AG04449 (cell line): ENCODE measurements at regions of chr9 and their contacts with region 1.

Region 1: GRCh38 chr9:18473652-18474279 is at the start of gene ADAMTSL1:
- DNase-seq: no peak
- H3K4me3 ChIP-seq: peak within 1 kb of the TSS; percentile 84
- CTCF ChIP-seq: no peak

Region 2: DNA sequence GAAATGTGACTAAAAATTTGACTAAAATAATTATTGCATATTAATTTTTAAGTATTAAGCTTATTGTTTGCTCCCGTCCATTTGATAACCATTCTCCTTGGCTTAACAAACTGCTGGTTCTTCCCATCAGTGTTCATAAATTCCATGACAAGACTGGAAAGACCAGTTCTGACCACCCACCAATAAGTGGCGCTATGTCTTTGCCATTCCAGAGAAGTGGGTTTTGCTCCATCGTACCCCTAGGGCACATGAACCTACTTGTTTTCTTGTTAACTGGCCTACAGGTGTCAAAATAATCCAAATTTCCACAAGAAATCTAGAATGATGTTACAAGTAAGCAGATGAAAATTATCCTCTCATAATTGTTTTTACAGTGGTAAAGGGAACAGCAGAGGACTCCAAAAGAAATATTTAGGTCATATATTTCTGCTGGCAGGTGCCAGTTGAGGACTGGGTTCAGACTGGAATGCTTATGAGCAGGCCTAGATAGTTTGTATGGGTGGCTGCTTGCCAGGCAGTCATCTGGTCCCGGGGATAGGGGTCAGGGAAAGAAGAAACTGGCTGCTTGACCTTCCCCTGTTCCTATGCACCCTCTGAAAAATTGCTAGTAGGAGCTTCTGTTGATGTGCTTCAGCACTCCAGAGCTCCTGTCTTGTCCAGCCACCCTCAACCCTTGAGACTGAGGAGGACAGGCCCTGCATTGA is 282.9 kb before region 1 on chr9:
- CTCF ChIA-PET with region 1: no interaction called
- POLR2A ChIA-PET with region 1: no interaction called
- DNase-seq: no peak
- H3K4me3 ChIP-seq: no peak overlapping the region
- CTCF ChIP-seq: no peak

Region 3: GRCh38 chr9:18490635-18491370 is 17.0 kb after region 1 on chr9:
- CTCF ChIA-PET with region 1: interaction called, 8 read pairs
- POLR2A ChIA-PET with region 1: interaction called, 32 read pairs
- DNase-seq: peak; percentile 98
- H3K4me3 ChIP-seq: peak overlapping the region; percentile 9
- CTCF ChIP-seq: no peak

Region 4: DNA sequence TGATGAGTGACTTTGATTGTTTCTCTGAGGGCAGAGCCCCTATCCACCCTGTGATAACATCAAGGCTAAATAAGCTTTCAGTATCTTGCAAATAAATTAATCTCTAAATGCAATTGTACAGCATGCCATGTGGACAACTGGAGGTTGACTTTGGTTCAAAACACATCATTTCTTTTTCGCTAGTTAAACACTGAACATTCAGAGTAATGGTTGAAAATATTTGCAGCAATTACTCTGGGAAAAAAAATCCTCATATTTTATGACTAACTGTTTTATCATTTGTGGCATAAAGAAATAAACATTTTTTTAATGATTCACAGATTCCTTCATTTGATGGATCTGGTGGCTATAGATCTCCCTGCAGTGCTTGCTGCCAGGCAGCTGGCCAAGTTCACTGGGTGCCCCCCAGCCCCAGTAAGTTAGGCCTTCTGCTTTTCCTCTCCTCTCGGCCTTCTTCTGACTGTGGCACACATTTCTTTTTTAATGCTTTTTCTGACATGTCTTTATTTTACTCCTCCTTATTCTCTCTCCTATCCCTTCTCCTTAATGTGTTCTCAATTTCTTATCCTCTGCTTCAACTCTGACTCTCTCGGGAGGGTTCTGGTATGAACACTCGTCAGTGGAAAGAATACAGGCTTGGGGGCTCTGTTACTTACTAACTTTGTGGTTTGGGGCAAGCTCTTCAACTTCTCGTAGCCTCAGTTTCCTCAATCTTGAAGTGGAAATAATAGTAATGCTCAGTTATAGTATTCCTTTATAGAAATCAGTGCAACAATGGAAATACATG is 69.8 kb after region 1 on chr9:
- CTCF ChIA-PET with region 1: interaction called, 4 read pairs
- POLR2A ChIA-PET with region 1: interaction called, 21 read pairs
- DNase-seq: peak; percentile 53
- H3K4me3 ChIP-seq: no peak overlapping the region
- CTCF ChIP-seq: no peak